ENCODE measurements at regions of chr2 and their contacts with region 1.

Region 1: GRCh38 chr2:202671317-202672035 is 36.7 kb downstream of the FAM117B start:
- DNase-seq: no peak
- ATAC-seq: no peak
- H3K4me3 Mint-ChIP-seq: no peak overlapping the region
- H3K27ac Mint-ChIP-seq: peak overlapping the region; percentile 87
- H3K4me1 Mint-ChIP-seq: peaks cover 88% of the 10 kb centered on the region
- H3K27me3 Mint-ChIP-seq: no peaks in the 10 kb centered on the region
- CTCF ChIP-seq: no peak

Region 2: DNA sequence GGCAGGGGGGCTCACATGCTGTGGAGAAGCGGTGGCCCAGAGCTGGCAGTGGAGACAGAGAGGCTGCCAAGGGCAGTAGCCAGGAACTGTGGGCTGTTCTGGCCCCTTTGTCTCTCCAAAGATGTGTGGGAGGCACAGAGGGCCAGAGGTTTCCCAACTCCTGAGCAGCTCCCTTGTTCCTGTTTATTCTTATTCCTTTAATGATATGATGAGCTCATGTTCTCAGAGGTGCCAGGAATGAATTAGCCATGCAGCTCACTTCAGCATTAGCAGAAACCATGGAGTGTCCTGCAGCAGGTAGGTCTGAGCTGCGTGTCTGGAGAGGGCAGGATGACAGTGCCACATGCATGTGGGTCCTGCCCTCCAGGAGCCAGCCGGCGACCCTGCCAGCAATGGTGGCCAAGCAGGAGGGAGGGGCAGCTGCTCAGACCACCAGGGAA is 715.8 kb before region 1 on chr2:
- CTCF ChIA-PET with region 1: no interaction called
- POLR2A ChIA-PET with region 1: no interaction called
- intact Hi-C with region 1: no loop called
- DNase-seq: no peak
- ATAC-seq: no peak
- H3K4me3 Mint-ChIP-seq: no peak overlapping the region
- H3K27ac Mint-ChIP-seq: no peak overlapping the region
- H3K4me1 Mint-ChIP-seq: peaks cover 2% of the 10 kb centered on the region
- H3K27me3 Mint-ChIP-seq: peaks cover 11% of the 10 kb centered on the region
- CTCF ChIP-seq: no peak

Region 3: GRCh38 chr2:202609381-202610145 is 61.9 kb before region 1 on chr2:
- CTCF ChIA-PET with region 1: no interaction called
- POLR2A ChIA-PET with region 1: interaction called, 14 read pairs
- intact Hi-C with region 1: loop called (anchors 1 kb)
- DNase-seq: no peak
- ATAC-seq: peak; percentile 81
- H3K4me3 Mint-ChIP-seq: peak overlapping the region; percentile 70
- H3K27ac Mint-ChIP-seq: peak overlapping the region; percentile 99
- H3K4me1 Mint-ChIP-seq: peaks cover 39% of the 10 kb centered on the region
- H3K27me3 Mint-ChIP-seq: no peaks in the 10 kb centered on the region
- CTCF ChIP-seq: no peak

Region 4: DNA sequence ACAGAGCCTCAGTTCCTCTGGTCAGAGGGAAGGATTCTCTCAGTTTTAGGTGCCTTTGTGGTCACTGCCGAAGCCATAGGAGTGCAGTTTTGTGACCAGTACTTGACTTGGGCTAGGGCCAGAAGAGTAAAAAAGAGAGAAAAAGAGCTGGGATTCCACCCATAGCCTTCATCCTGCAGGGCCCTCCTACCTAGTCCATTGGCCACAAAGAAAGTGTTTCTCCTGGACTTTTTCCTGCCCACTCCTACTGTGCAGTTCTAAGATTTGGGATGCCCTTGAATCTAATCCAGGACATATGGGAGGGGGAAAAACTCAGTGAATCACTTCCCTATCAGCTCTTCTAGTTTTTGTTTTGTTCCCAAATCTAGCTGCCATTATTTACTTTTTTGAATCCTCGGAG is 10.7 kb before region 1 on chr2:
- CTCF ChIA-PET with region 1: no interaction called
- POLR2A ChIA-PET with region 1: interaction called, 6 read pairs
- intact Hi-C with region 1: loop called (anchors 1 kb)
- DNase-seq: no peak
- ATAC-seq: no peak
- H3K4me3 Mint-ChIP-seq: no peak overlapping the region
- H3K27ac Mint-ChIP-seq: no peak overlapping the region
- H3K4me1 Mint-ChIP-seq: peaks cover 89% of the 10 kb centered on the region
- H3K27me3 Mint-ChIP-seq: no peaks in the 10 kb centered on the region
- CTCF ChIP-seq: no peak

Region 5: DNA sequence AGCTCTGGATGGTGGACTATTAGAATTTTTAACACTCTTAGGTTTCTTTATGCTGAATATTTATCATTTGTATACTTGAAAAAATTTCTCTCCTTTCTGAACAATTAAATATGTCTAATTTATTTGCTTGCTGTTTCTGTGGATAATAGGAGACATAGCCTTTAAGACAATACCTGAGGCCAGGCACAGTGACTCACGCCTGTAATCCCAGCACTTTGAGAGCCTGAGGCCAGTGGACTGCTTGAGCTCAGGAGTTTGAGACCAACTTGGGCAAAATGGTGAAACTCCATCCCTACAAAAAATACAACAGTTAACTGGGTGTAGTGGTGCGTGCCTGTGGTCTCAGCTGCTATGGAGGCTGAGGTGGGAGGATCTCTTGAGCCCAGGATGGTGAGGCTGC is 18.0 kb after region 1 on chr2:
- CTCF ChIA-PET with region 1: no interaction called
- POLR2A ChIA-PET with region 1: interaction called, 4 read pairs
- intact Hi-C with region 1: loop called (anchors 2 kb)
- DNase-seq: no peak
- ATAC-seq: no peak
- H3K4me3 Mint-ChIP-seq: no peak overlapping the region
- H3K27ac Mint-ChIP-seq: peak overlapping the region; percentile 61
- H3K4me1 Mint-ChIP-seq: peaks cover 43% of the 10 kb centered on the region
- H3K27me3 Mint-ChIP-seq: no peaks in the 10 kb centered on the region
- CTCF ChIP-seq: no peak

Region 6: GRCh38 chr2:202750763-202751427 is 79.4 kb after region 1 on chr2:
- CTCF ChIA-PET with region 1: no interaction called
- POLR2A ChIA-PET with region 1: interaction called, 23 read pairs
- intact Hi-C with region 1: loop called (anchors 2 kb)
- DNase-seq: no peak
- ATAC-seq: peak; percentile 85
- H3K4me3 Mint-ChIP-seq: peak overlapping the region; percentile 54
- H3K27ac Mint-ChIP-seq: peak overlapping the region; percentile 92
- H3K4me1 Mint-ChIP-seq: peaks cover 51% of the 10 kb centered on the region
- H3K27me3 Mint-ChIP-seq: no peaks in the 10 kb centered on the region
- CTCF ChIP-seq: no peak

Measured in activated B cell treated with CpG ODN at 0.5 μM for 24 hours (primary cell).